ENCODE measurements at regions of chr19 and their contacts with region 1.

Region 1: GRCh38 chr19:19821366-19821951 is at the start of gene ZNF506:
- DNase-seq: peak; percentile 98
- ATAC-seq: peak; percentile 98
- H3K4me3 Mint-ChIP-seq: peak within 1 kb of the TSS; percentile 100
- H3K27ac Mint-ChIP-seq: peak within 1 kb of the TSS; percentile 100
- H3K4me1 Mint-ChIP-seq: peaks cover 34% of the 10 kb centered on the region
- H3K27me3 Mint-ChIP-seq: no peaks in the 10 kb centered on the region
- total RNA-seq, gene ZNF506: 22.4 to 25.1 TPM

Region 2: GRCh38 chr19:19732579-19733501 is 88.6 kb before region 1 on chr19 and contains the start of gene ZNF14:
- CTCF ChIA-PET with region 1: no interaction called
- POLR2A ChIA-PET with region 1: interaction called, 20 read pairs
- DNase-seq: peak; percentile 96
- ATAC-seq: peak; percentile 99
- H3K4me3 Mint-ChIP-seq: peak within 1 kb of the TSS; percentile 97
- H3K27ac Mint-ChIP-seq: peak within 1 kb of the TSS; percentile 94
- H3K4me1 Mint-ChIP-seq: peaks cover 18% of the 10 kb centered on the region
- H3K27me3 Mint-ChIP-seq: no peaks in the 10 kb centered on the region
- total RNA-seq, gene ZNF14: 6.9 TPM

Region 3: DNA sequence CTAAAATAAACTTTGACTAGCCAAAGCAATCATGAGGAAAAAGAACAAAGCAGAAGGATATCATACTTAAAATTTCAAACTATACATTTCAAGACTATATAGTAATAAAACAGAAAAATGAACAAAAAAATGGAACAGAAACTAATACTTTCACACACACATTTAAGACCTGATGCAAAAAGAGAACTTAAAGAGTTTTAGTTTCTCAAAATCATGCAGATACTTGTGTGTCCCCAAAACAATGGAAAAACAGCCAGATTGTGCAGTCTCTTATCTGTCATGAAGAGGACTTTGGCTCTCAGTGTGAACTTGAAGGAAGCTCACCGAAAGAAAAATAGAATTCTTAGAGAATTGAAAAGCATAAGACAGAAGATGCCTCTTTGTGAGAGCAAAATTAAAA is 16.0 kb before region 1 on chr19:
- CTCF ChIA-PET with region 1: interaction called, 5 read pairs
- POLR2A ChIA-PET with region 1: interaction called, 11 read pairs
- DNase-seq: no peak
- ATAC-seq: no peak
- H3K4me3 Mint-ChIP-seq: no peak overlapping the region
- H3K27ac Mint-ChIP-seq: no peak overlapping the region
- H3K4me1 Mint-ChIP-seq: peaks cover 11% of the 10 kb centered on the region
- H3K27me3 Mint-ChIP-seq: no peaks in the 10 kb centered on the region

Region 4: GRCh38 chr19:19865739-19866481 is 44.5 kb after region 1 on chr19 and contains the start of gene ZNF253:
- CTCF ChIA-PET with region 1: interaction called, 8 read pairs
- POLR2A ChIA-PET with region 1: interaction called, 47 read pairs
- DNase-seq: peak; percentile 99
- ATAC-seq: peak; percentile 96
- H3K4me3 Mint-ChIP-seq: peak within 1 kb of the TSS; percentile 100
- H3K27ac Mint-ChIP-seq: peak within 1 kb of the TSS; percentile 100
- H3K4me1 Mint-ChIP-seq: peaks cover 32% of the 10 kb centered on the region
- H3K27me3 Mint-ChIP-seq: no peaks in the 10 kb centered on the region
- total RNA-seq, gene ZNF253: 15.7 to 17.5 TPM

Region 5: DNA sequence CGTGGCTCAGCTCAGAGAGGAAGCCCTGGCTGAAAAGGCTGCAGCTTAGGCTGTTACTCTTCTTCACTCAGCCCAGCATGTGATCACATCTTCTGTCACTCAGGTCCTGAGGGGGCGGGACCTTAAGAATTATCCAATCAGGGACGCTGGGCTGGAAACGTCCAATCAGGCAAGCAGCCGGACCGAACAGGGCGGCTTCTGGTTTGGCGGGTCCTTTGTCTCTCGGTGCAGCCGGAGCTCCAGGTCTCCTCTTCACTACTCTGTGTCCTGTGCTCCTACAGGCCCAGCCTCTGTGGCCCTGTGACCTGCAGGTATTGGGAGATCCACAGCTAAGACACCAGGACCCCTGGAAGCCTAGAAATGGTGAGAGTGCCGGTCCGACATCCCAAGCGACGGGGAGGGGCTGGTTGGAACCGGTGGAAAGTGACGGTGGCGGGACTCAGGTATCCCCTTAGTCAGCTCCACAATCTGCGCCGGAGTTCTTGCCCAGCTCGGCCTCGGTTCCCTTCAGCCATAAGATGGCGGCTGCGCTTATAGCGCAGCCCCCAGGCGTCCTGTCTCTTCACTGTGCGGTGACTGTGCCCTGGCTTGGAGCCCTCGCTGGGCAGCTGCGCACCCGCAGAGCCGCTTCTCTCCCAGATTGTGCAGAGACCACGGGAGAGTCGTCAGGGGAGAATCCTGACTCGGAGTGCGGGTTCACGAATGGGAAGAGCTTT is 79.4 kb after region 1 on chr19 and contains the start of gene ZNF93:
- CTCF ChIA-PET with region 1: interaction called, 6 read pairs
- POLR2A ChIA-PET with region 1: interaction called, 43 read pairs
- DNase-seq: peak; percentile 96
- ATAC-seq: peak; percentile 96
- H3K4me3 Mint-ChIP-seq: peak within 1 kb of the TSS; percentile 97
- H3K27ac Mint-ChIP-seq: peak within 1 kb of the TSS; percentile 98
- H3K4me1 Mint-ChIP-seq: peaks cover 40% of the 10 kb centered on the region
- H3K27me3 Mint-ChIP-seq: no peaks in the 10 kb centered on the region
- total RNA-seq, gene ZNF93: 15.8 to 17.9 TPM

Measured in activated CD8-positive, alpha-beta T cell treated with anti-CD3 and anti-CD28 coated beads, Interleukin-2, amount 10 ng/mL, durations not matched to agents 7 days and 5 days (primary cell).